Panc1 (cell line): ENCODE measurements at regions of chr1 and their contacts with region 1.

Region 1: DNA sequence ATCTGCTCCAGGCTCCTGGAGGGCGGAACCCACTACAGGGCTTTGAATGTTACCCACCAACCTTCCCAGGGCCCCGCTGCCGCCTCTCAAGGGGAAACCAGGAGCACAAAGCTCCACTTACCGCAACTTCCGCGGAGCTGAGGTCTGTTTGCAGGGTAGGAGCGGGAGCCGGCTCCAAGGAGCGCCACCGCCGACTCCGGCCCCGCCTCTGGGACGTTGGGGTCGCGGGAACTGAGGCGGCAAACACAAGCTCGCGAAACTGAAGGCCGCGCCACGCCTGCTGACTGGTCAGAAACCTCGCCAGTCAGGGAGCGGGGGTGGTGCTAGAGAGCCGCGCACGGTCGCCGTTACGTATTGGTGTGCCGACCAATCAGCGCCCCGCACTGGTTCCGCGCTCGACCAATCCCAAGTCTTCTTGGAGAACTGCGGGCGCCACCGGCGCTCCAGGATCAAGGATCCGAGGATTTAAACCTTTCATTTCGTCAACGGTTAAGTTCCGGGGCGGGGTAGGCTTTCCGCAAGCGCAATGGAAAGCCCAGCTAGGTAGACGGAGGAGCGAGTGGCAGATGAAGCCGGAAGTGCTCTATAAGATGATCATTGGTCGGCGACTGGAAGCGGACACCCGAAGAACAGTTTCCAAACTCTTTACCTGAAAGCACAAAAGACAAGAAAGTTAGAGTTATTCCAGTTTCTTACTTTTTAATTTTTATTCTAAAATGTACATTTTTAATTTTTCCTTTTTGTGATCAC is at the start of gene STIL:
- DNase-seq: peak; percentile 98
- ATAC-seq: peak; percentile 98
- H3K4me3 ChIP-seq: peak within 1 kb of the TSS; percentile 93 to 100
- H3K27ac ChIP-seq: peak within 1 kb of the TSS; percentile 97
- H3K4me1 ChIP-seq: no peaks in the 10 kb centered on the region
- H3K27me3 ChIP-seq: no peaks in the 10 kb centered on the region
- CTCF ChIP-seq: no peak
- total RNA-seq, gene STIL: 31.6 TPM

Region 2: GRCh38 chr1:47147047-47147785 is 166.9 kb before region 1 on chr1:
- CTCF ChIA-PET with region 1: no interaction called
- POLR2A ChIA-PET with region 1: no interaction called
- in situ Hi-C with region 1: no loop called
- intact Hi-C with region 1: no loop called
- DNase-seq: no peak
- ATAC-seq: no peak
- H3K4me3 ChIP-seq: no peak overlapping the region
- H3K27ac ChIP-seq: no peak overlapping the region
- H3K4me1 ChIP-seq: no peaks in the 10 kb centered on the region
- H3K27me3 ChIP-seq: no peaks in the 10 kb centered on the region
- CTCF ChIP-seq: no peak

Region 3: DNA sequence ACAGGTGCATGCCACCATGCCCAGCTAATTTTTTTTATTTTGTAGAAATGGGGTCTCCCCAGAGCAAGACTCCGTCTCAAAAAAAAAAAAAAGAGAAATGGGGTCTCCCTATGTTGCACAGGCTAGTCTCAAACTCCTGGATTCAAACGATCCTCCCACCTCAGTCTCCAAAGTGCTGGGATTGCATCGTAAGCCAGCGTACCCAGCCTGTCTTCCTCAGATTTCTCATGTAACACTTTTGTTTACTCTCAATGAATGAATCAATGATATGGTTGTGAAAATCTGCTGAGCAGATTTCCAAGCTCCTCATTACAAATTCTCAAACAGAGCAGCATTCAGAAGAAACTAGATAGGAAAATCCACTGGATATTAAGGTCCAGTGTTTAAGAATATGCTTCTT is 26.1 kb after region 1 on chr1:
- CTCF ChIA-PET with region 1: no interaction called
- POLR2A ChIA-PET with region 1: interaction called, 10 read pairs
- in situ Hi-C with region 1: no loop called
- intact Hi-C with region 1: no loop called
- DNase-seq: no peak
- ATAC-seq: no peak
- H3K4me3 ChIP-seq: no peak overlapping the region
- H3K27ac ChIP-seq: no peak overlapping the region
- H3K4me1 ChIP-seq: peaks cover 4% of the 10 kb centered on the region; the same call in 1 of the 2 replicates
- H3K27me3 ChIP-seq: no peaks in the 10 kb centered on the region
- CTCF ChIP-seq: no peak

Region 4: GRCh38 chr1:47409311-47410070 is 95.4 kb after region 1 on chr1:
- CTCF ChIA-PET with region 1: no interaction called
- POLR2A ChIA-PET with region 1: no interaction called
- in situ Hi-C with region 1: no loop called
- intact Hi-C with region 1: no loop called
- DNase-seq: no peak
- ATAC-seq: no peak
- H3K4me3 ChIP-seq: no peak overlapping the region
- H3K27ac ChIP-seq: no peak overlapping the region
- H3K4me1 ChIP-seq: no peaks in the 10 kb centered on the region
- H3K27me3 ChIP-seq: no peaks in the 10 kb centered on the region
- CTCF ChIP-seq: no peak